Dendritic cell treated with granulocyte-macrophage colony-stimulating factor and Interleukin-4, amounts not matched to agents 40 ng/mL and 50 ng/mL, for 4 days (primary cell): ENCODE measurements at regions of chr17 and their contacts with region 1.

Region 1: DNA sequence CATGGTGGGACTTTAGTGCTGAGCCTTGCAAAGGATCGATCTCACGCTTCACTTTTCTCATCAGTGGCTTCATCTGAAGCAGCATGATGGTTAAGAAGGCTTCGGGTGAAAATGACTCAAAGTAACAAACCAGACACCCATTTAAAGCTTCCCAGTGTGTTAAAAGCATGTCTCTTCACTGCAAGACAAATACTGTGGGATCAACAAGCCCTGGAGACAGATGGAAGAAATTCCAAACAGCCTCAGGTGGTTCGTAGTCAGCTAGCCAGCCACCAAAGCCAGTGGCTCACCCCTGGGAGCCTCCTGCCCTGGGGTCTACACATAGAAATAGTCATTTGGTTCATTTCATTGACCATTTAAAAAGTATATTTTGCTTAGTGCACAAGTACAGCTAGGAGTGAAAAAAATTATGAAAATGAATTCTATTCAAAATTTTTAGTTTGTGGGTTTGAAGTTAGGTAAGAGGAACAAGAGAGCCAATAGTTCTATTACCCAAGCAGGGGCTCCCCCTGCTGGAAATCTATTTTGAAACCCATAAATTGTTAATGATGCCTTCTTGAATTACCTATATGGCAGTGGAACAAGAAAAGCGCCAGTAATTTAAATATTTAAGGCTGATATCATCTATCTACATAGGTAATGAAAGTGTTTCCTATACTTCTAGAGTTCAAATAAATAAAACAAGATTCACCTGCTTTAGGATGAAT is 51.6 kb downstream of the PMP22 start:
- H3K4me3 Mint-ChIP-seq: no peak overlapping the region
- H3K27ac Mint-ChIP-seq: no peak overlapping the region
- H3K4me1 Mint-ChIP-seq: no peaks in the 10 kb centered on the region
- H3K27me3 Mint-ChIP-seq: peaks cover 16% of the 10 kb centered on the region

Region 2: DNA sequence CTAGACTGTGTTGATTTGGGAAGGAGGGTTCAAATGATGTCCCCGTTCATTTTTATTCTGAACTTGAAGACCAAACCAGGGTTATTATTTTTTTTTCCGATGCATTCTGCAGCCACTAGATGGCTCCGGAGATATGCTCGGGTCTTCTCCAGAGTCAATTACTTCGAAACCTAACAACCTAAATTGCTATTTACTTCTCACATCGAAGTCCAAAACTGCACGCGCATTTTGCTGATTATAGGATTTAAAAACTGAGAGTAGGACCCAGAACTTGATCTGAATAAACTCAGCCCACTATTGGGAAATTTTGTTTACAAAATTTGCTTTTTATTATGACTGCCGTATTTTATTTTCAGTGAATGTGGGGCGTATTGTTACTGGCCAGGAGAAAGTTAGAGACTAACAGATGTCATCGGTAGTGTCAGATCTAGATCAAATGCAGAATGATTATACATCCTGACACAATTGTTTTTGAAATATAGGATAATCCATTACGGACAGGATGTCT is 1875.6 kb before region 1 on chr17:
- intact Hi-C with region 1: loop called (anchors 5 kb)
- H3K4me3 Mint-ChIP-seq: no peak overlapping the region
- H3K27ac Mint-ChIP-seq: no peak overlapping the region
- H3K4me1 Mint-ChIP-seq: no peaks in the 10 kb centered on the region
- H3K27me3 Mint-ChIP-seq: peaks cover 7% of the 10 kb centered on the region

Region 3: GRCh38 chr17:14859542-14859941 is 354.0 kb before region 1 on chr17:
- intact Hi-C with region 1: no loop called
- H3K4me3 Mint-ChIP-seq: no peak overlapping the region
- H3K27ac Mint-ChIP-seq: no peak overlapping the region
- H3K4me1 Mint-ChIP-seq: no peaks in the 10 kb centered on the region
- H3K27me3 Mint-ChIP-seq: no peaks in the 10 kb centered on the region

Region 4: GRCh38 chr17:14986127-14986526 is 227.4 kb before region 1 on chr17:
- intact Hi-C with region 1: no loop called
- H3K4me3 Mint-ChIP-seq: no peak overlapping the region
- H3K27ac Mint-ChIP-seq: no peak overlapping the region
- H3K4me1 Mint-ChIP-seq: no peaks in the 10 kb centered on the region
- H3K27me3 Mint-ChIP-seq: no peaks in the 10 kb centered on the region